MCF 10A (cell line): ENCODE measurements at regions of chr2 and their contacts with region 1.

Region 1: DNA sequence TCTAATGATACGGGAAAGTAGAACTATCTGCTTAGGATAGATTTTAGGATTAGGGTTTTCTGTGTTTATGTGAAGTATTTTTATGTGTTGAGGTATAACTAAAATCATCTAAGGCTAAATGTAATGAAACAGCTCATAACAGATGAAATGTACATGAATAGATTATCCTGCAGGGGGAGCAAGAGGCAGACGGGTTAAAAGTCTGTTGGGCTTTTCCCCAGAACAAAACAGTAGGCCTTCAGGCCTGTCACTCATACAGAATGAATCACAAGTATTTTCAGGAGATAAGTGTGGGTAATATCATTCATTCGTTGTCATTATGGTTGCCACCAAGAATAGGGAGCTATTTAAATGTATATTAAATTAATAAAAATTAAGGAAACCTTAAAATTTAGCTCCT is 107.9 kb upstream of the IL1R2 start:
- DNase-seq: peak; percentile 76
- H3K4me3 Mint-ChIP-seq: no peak overlapping the region
- H3K27ac Mint-ChIP-seq: no peak overlapping the region
- H3K4me1 Mint-ChIP-seq: no peaks in the 10 kb centered on the region
- H3K27me3 Mint-ChIP-seq: no peaks in the 10 kb centered on the region
- CTCF ChIP-seq: peak; percentile 42

Region 2: DNA sequence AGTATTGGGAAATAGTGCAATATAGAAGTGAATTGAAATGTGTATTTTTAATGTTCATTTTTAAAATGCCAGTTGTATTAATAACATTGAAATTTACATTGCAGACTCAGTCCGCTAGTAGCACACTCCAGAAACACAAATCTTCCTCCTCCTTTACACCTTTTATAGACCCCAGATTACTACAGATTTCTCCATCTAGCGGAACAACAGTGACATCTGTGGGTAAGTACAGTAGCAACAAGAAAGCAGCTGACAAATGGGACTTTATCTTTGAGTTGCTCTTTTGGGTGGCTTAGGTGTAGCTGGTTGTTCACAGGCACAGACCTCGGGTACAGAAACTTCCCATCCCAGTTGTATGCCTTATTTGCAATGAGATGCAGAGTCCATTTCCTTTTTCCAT is 10.3 kb before region 1 on chr2:
- CTCF ChIA-PET with region 1: interaction called, 16 read pairs
- POLR2A ChIA-PET with region 1: interaction called, 4 read pairs
- intact Hi-C with region 1: no loop called
- DNase-seq: no peak
- H3K4me3 Mint-ChIP-seq: no peak overlapping the region
- H3K27ac Mint-ChIP-seq: no peak overlapping the region
- H3K4me1 Mint-ChIP-seq: no peaks in the 10 kb centered on the region
- H3K27me3 Mint-ChIP-seq: no peaks in the 10 kb centered on the region
- CTCF ChIP-seq: no peak

Region 3: GRCh38 chr2:101983928-101984327 is 100.1 kb after region 1 on chr2:
- CTCF ChIA-PET with region 1: interaction called, 65 read pairs
- POLR2A ChIA-PET with region 1: interaction called, 4 read pairs
- intact Hi-C with region 1: loop called (anchors 1 kb)
- DNase-seq: peak; percentile 60
- H3K4me3 Mint-ChIP-seq: no peak overlapping the region
- H3K27ac Mint-ChIP-seq: no peak overlapping the region
- H3K4me1 Mint-ChIP-seq: peaks cover 42% of the 10 kb centered on the region
- H3K27me3 Mint-ChIP-seq: no peaks in the 10 kb centered on the region
- CTCF ChIP-seq: peak; percentile 33

Region 4: DNA sequence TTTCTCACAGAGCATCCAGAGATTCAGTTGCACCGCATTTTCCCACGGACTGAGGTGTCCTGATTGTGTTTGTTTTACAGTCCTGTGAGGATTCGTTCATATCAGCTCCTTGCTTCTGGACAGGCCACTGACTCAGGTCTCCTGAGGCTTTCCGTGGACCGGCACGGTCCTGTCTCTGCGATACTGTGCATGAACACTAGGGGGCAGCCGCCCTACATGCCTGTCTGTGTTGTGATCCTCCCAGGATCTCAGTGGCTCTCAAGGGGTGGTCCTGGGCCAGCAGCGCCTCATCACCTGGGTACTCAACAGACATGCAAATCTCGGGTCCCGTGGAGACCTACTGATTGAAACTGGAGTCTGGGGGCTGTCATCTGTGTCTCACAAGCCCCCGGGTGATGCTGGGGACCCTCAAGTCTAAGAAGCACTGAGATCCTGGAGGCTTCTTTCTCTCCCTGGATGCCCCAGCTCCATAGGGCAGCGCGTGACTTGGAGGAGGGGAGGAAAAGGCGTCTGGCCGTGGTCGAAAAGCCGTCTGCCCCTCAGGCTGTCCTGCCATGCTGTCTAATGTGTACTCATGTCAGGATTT is 136.8 kb after region 1 on chr2:
- CTCF ChIA-PET with region 1: interaction called, 26 read pairs
- POLR2A ChIA-PET with region 1: interaction called, 6 read pairs
- intact Hi-C with region 1: no loop called
- DNase-seq: peak; percentile 84
- H3K4me3 Mint-ChIP-seq: no peak overlapping the region
- H3K27ac Mint-ChIP-seq: no peak overlapping the region
- H3K4me1 Mint-ChIP-seq: peaks cover 18% of the 10 kb centered on the region
- H3K27me3 Mint-ChIP-seq: no peaks in the 10 kb centered on the region
- CTCF ChIP-seq: peak; percentile 98

Region 5: DNA sequence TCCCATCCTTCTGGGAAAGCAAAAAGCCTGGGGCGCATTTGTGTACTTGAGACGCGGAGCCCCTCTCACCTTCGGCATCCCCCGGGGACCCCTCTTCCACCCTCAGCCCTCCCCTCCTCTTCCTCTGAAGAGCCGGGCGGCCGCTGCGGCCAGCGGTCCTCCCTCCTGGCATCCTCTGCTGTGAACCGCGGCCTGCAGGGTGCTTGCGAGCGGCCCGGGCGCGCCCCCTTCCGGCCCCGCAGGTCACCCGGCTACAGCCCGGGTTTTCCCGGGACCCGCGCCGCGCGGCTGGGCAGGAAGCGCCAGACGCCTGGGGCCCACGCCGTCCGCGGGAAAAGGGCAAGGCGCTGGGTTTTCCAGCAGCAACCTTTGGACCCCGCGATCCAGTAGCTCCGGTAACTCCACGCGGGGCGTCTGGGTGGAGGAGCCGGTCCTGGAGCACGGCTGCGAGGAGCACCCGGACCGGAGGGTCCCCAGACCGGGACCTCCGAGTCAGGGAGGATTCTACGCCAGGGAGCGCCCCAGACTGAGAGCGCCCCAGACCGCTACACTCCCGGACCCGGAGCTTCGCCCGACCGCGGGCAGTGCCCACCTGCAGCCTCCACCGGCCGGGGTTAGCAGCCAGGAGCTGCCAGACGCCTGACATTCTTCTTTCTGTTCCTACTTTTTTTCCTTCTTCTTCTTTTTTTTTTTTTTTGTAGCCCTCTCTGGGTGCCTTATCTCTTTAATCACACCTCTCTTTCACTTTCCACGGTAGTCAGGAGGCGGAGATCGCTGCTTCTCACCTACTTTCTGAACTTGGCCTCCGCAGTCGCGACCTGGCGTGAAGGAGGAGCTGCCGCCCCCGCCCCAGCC is 471.9 kb after region 1 on chr2 and contains the start of gene IL18R1:
- CTCF ChIA-PET with region 1: interaction called, 8 read pairs
- POLR2A ChIA-PET with region 1: no interaction called
- intact Hi-C with region 1: loop called (anchors 5 kb)
- DNase-seq: peak; percentile 71
- H3K4me3 Mint-ChIP-seq: peak within 1 kb of the TSS; percentile 87
- H3K27ac Mint-ChIP-seq: peak within 1 kb of the TSS; percentile 68
- H3K4me1 Mint-ChIP-seq: peaks cover 19% of the 10 kb centered on the region
- H3K27me3 Mint-ChIP-seq: no peaks in the 10 kb centered on the region
- CTCF ChIP-seq: peak; percentile 85
- total RNA-seq, gene IL18R1: 3.5 and 6.7 TPM in 2 replicates